Common myeloid progenitor, CD34-positive (primary cell): ENCODE measurements at regions of chr17 and their contacts with region 1.

Region 1: DNA sequence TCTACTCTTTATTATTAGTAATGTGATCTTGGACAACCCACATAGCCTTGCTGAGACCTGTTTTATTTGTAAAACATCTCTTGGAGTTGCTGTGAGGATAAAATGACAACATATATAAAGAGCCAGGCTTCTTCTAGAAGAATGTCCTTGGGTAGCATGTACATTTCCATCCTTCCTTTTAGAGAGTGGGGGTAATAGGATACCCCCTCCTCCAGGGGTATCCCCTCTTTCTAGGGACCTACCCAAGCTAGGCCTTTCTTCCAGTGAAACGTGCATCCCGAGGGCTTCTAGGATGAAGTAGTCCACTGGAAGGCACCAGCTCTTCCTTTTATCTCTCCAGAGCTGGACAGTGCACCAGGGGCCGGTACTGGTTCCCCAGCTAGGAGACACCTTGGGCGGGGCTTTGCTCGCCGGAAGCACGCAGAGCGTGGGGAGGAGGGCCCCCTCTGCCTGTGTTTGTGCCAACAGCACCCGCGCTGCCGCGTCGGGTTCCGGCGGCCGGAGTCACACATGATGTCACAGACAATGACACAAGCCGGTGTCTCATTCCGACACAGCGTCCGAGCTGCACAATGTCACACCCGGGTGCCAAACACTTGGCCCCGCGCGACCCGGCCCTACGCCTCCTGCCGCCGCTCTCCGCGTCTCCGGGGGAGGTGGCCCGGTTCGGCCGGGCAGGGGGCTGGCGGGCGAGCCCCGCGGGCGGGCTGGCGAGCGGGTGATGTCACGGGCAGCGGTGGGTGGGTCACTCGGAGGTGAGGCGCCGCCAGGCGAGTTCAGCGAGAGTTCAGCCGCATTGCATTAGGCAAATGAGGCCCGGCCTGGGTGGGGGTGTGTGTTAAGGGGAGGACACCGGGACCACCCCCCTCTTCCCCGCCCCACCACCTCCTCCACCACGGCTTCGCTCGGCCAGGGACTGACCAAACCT is 23.4 kb downstream of the GJD3 start:
- DNase-seq: peak; percentile 84 to 89 (median 84)
- H3K4me3 ChIP-seq: peak overlapping the region; percentile 40 to 91 (median 76)
- H3K27ac ChIP-seq: peak overlapping the region; percentile 64 to 82
- H3K4me1 ChIP-seq: peaks cover 26 to 95% (median 88%) of the 10 kb centered on the region in 4 experiments
- H3K27me3 ChIP-seq: no peaks in the 10 kb centered on the region

Region 2: DNA sequence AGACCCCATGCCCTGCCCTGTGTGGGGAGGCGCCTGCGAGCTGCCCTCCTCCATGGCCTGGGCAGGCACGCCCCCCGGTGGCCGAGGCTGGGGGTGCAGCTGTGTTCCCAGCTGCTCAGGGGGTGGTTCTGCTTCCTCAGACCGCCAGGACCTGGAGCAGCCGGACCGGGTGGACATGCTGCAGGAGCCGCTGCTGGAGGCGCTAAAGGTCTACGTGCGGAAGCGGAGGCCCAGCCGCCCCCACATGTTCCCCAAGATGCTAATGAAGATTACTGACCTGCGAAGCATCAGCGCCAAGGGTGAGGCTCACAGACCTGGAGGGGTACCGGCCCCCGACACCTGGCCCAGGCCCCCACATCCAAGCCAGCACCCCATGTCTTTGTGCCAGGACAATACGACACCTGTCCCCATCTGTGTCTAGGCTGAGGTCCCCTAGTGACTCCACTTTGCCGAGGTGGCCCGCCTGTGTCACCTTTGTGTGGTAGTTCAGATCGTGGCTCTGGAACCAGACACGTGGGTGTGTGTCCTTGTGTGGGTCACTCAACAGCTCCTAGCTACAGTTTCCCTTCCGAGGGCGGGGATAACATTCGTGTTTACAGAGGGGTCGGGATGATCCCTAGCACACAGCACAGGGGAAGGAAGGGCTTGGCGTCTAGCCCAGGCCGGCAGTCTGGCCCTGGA is 14.1 kb after region 1 on chr17:
- CTCF ChIA-PET with region 1: interaction called, 1,388 read pairs
- POLR2A ChIA-PET with region 1: interaction called, 10 read pairs
- DNase-seq: peak; percentile 65 to 78 (median 68)
- H3K4me3 ChIP-seq: no peak overlapping the region
- H3K27ac ChIP-seq: no peak overlapping the region
- H3K4me1 ChIP-seq: peaks cover 3 to 46% (median 22%) of the 10 kb centered on the region in 4 experiments
- H3K27me3 ChIP-seq: peaks cover 0 to 3% (median 0%) of the 10 kb centered on the region in 5 experiments